IMR-90 (cell line): ENCODE measurements at regions of chr3 and their contacts with region 1.

Region 1: DNA sequence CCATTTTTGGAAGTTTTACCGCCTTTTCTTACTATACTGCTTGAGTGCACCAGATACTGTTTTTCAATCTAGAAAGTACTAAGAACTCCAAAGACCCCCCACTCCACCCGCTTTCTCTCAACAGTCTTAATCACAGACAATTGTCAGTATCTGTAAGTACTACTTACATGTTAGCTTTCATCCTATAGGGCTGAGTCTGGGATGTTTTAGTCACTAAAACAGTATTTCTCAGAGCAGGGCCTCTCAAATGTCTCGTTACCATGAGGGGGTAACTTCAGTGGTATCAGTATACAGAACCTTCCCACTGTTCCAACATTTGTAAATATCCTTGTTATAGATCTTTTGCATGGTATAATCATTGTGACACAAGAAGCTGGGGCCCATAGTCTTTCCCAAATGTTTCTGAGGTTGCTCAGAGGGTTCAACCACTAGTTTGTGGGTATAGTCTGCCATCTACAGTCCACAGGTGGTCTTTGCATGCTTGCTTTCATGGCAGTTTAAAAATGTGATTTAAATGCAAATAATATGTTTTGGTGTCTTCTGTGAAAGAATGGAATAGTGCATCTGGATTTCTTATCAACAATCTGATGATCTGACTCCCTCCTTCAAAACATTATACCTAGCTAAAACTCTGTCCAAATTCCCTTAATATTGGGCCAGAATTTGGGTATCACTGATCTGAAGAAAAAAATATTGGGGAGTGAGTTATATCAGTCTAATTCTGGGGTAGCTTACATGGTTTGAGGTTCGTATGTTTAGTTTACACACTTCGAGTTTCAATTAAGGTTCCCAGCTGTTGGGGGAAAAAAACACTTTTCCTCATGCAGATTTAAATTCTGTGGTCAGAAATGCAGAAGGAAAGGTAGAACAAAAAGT is 18.0 kb upstream of the DNAJC13 start:
- DNase-seq: peak; percentile 68
- ATAC-seq: peak; percentile 98
- H3K4me3 ChIP-seq: no peak overlapping the region
- H3K27ac ChIP-seq: no peak overlapping the region
- H3K4me1 ChIP-seq: no peaks in the 10 kb centered on the region
- H3K27me3 ChIP-seq: peaks cover 2% of the 10 kb centered on the region; the same call in 1 of the 2 replicates
- CTCF ChIP-seq: peak; percentile 93
- POLR2A ChIP-seq: peak; percentile 44; the same call in 1 of the 2 replicates
- RAD21 ChIP-seq: peak; percentile 88

Region 2: GRCh38 chr3:131762981-131763564 is 636.2 kb before region 1 on chr3:
- CTCF ChIA-PET with region 1: no interaction called
- POLR2A ChIA-PET with region 1: no interaction called
- dilution Hi-C with region 1: no loop called
- in situ Hi-C with region 1: no loop called
- intact Hi-C with region 1: no loop called
- DNase-seq: no peak
- ATAC-seq: no peak
- H3K4me3 ChIP-seq: no peak overlapping the region
- H3K27ac ChIP-seq: no peak overlapping the region
- H3K4me1 ChIP-seq: no peaks in the 10 kb centered on the region
- H3K27me3 ChIP-seq: no peaks in the 10 kb centered on the region
- CTCF ChIP-seq: no peak
- POLR2A ChIP-seq: no peak
- RAD21 ChIP-seq: no peak

Region 3: DNA sequence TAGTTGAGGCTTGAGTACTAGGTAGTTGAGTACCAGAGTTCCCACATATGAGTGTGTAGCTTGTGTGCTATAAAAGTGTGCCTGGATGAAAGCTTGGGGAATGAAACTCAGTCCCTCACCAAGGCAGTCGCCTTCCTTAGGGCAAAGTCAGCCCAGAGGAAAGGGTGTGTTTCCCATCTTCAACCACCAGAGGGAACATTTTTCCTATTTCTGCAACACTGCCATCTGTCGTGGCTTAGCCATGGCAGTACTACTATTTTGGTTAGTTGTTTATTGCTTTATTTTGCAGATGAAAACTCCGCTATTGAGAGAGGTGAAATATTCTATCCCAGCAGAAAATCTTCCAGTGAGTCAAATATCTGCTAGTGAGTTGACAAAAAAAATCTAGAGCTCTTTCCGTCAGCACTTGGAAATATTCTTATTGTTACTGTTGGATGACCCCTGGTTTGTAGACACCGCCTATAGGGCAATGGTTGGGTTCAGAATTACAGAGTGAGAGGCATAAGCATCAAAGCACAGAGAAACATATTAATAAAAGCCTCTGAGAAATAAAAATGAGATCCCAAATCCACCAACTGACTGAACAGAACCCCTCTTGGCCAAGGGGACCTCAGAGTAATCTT is 604.4 kb before region 1 on chr3:
- CTCF ChIA-PET with region 1: no interaction called
- POLR2A ChIA-PET with region 1: no interaction called
- dilution Hi-C with region 1: no loop called
- in situ Hi-C with region 1: no loop called
- intact Hi-C with region 1: loop called (anchors 1 kb)
- DNase-seq: peak; percentile 52
- ATAC-seq: peak; percentile 95
- H3K4me3 ChIP-seq: no peak overlapping the region
- H3K27ac ChIP-seq: no peak overlapping the region
- H3K4me1 ChIP-seq: no peaks in the 10 kb centered on the region
- H3K27me3 ChIP-seq: no peaks in the 10 kb centered on the region; the same call in 1 of the 2 replicates
- CTCF ChIP-seq: peak; percentile 88
- POLR2A ChIP-seq: no peak
- RAD21 ChIP-seq: peak; percentile 71

Region 4: DNA sequence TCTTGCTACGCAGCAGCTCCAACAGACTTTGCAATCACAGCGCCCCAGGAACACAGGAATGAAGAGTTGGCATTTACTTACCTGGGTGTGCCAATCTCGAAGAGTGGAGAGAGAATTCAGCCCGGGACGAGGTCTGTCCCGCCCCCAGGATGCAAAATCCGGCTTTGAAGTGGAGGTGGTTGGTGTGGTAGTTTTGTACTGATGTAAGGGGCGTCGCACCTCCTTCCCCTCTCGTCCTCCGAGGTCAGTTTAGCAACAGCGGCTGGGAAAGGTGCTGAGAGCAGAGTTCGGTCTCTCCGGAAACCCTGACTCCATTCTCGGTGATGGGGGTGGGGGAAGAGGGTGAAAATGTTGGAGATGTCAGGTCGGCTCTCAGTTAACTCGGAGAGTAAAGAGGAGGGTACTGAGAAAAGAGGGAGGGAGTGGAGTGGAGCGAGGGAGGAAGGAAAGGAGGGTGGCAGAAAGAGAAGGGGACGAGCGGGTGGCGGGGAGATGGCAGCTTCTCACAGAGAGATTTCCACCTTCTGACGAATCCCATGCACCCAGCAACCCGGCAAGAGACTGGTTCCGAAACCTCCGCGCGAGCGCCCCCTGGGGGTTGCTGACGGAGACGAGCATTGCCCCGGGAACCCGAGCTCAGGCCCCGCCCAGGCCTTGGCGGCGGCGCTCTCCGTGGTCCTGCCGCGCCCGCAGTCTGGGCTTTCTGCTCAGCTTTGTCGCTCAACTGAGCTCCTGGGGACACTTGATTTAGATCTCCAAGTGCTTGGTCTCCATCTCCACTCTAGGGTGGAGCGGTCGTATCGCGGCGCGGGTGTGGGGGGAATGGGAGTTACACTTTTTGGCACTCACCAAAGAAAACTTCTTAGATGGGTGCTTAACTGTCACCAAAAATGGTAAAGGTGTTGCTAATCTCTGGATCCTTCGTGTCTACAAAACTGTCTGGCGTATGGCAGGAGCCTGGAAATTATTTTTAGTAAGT is 364.5 kb before region 1 on chr3 and contains the start of gene CPNE4:
- CTCF ChIA-PET with region 1: interaction called, 3 read pairs
- POLR2A ChIA-PET with region 1: no interaction called
- dilution Hi-C with region 1: no loop called
- in situ Hi-C with region 1: no loop called
- intact Hi-C with region 1: loop called (anchors 1 kb)
- DNase-seq: peak; percentile 51
- ATAC-seq: peak; percentile 99
- H3K4me3 ChIP-seq: no peak within 1 kb of the TSS
- H3K27ac ChIP-seq: no peak within 1 kb of the TSS
- H3K4me1 ChIP-seq: no peaks in the 10 kb centered on the region
- H3K27me3 ChIP-seq: peaks cover 19% of the 10 kb centered on the region
- CTCF ChIP-seq: peak; percentile 84
- POLR2A ChIP-seq: no peak
- RAD21 ChIP-seq: peak; percentile 36; the same call in 1 of the 2 replicates
- total RNA-seq, gene CPNE4: not detected in 2 replicates

Region 5: GRCh38 chr3:132189601-132190000 is 209.7 kb before region 1 on chr3:
- CTCF ChIA-PET with region 1: no interaction called
- POLR2A ChIA-PET with region 1: no interaction called
- dilution Hi-C with region 1: no loop called
- in situ Hi-C with region 1: no loop called
- intact Hi-C with region 1: loop called (anchors 5 kb)
- DNase-seq: no peak
- ATAC-seq: no peak
- H3K4me3 ChIP-seq: no peak overlapping the region
- H3K27ac ChIP-seq: no peak overlapping the region
- H3K4me1 ChIP-seq: no peaks in the 10 kb centered on the region
- H3K27me3 ChIP-seq: no peaks in the 10 kb centered on the region; the same call in none of the 2 replicates
- CTCF ChIP-seq: no peak
- POLR2A ChIP-seq: no peak
- RAD21 ChIP-seq: no peak

Region 6: GRCh38 chr3:132253262-132253878 is 145.9 kb before region 1 on chr3:
- CTCF ChIA-PET with region 1: interaction called, 10 read pairs
- POLR2A ChIA-PET with region 1: no interaction called
- dilution Hi-C with region 1: no loop called
- in situ Hi-C with region 1: loop called (anchors 5 kb)
- intact Hi-C with region 1: loop called (anchors 1 kb)
- DNase-seq: peak; percentile 76
- ATAC-seq: peak; percentile 55
- H3K4me3 ChIP-seq: no peak overlapping the region
- H3K27ac ChIP-seq: no peak overlapping the region
- H3K4me1 ChIP-seq: peaks cover 8% of the 10 kb centered on the region
- H3K27me3 ChIP-seq: no peaks in the 10 kb centered on the region; the same call in 1 of the 2 replicates
- CTCF ChIP-seq: peak; percentile 89
- POLR2A ChIP-seq: no peak
- RAD21 ChIP-seq: peak; percentile 68

Region 7: DNA sequence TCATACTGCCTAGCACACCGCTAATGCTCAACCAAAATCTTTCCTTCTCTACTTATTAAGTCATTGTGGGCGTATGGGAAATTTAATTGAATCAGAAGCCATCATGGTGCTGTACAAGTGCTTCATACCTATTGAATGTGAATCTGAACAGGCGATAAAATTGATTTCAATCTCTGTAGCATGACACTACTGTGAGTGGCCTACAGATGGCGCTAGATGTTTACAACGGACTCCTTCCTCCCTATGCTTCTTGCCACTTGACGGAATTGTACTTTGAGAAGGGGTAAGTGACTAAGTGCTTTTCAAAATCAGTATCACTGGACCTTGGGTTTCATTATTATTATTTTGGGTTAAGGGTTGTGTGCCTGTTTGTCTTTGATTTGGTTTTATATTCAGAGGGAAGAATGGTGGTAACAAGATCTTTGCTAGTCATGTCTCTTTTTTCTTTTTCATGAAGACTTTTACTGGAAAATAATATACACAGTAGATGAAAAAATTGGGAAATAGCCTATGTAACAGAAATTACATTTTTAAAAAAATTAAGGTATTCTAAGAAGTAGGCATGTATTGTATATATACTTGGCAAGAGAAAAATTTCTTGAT is 46.6 kb before region 1 on chr3:
- CTCF ChIA-PET with region 1: interaction called, 6 read pairs
- POLR2A ChIA-PET with region 1: no interaction called
- dilution Hi-C with region 1: no loop called
- in situ Hi-C with region 1: no loop called
- intact Hi-C with region 1: loop called (anchors 1 kb)
- DNase-seq: peak; percentile 68
- ATAC-seq: peak; percentile 96
- H3K4me3 ChIP-seq: no peak overlapping the region
- H3K27ac ChIP-seq: no peak overlapping the region
- H3K4me1 ChIP-seq: no peaks in the 10 kb centered on the region
- H3K27me3 ChIP-seq: peaks cover 5% of the 10 kb centered on the region
- CTCF ChIP-seq: peak; percentile 91
- POLR2A ChIP-seq: no peak
- RAD21 ChIP-seq: peak; percentile 69

Region 8: GRCh38 chr3:132360717-132361116 is 38.6 kb before region 1 on chr3:
- CTCF ChIA-PET with region 1: no interaction called
- POLR2A ChIA-PET with region 1: no interaction called
- dilution Hi-C with region 1: no loop called
- in situ Hi-C with region 1: loop called (anchors 5 kb)
- intact Hi-C with region 1: no loop called
- DNase-seq: no peak
- ATAC-seq: peak; percentile 49; the same call in 1 of the 2 replicates
- H3K4me3 ChIP-seq: no peak overlapping the region
- H3K27ac ChIP-seq: no peak overlapping the region
- H3K4me1 ChIP-seq: no peaks in the 10 kb centered on the region
- H3K27me3 ChIP-seq: peaks cover 6% of the 10 kb centered on the region
- CTCF ChIP-seq: no peak
- POLR2A ChIP-seq: no peak
- RAD21 ChIP-seq: no peak